Transverse colon (tissue), 4 donors: ENCODE measurements at regions of chr1 and their contacts with region 1.

Region 1: DNA sequence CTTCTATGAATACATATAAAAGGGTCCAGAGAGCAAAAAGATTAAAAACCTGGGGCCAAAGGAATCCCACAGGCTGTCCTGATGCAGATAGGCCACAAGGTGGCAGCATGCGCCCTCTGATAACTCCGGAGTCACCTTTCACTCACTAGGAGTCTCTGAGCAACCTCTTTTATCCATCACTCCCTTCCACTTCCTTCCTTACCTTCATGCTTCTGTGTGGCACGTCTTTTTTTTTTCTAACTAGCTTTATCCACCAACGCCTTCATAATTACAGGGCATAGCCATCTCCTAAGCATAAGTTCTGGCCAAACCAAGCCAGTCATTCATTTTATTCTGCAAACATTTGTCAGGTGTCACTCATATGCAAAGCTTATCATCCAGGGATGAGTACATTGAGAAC is 3.9 kb upstream of the PGLYRP4 start:
- DNase-seq: peak; percentile 66
- H3K4me3 ChIP-seq: no peak overlapping the region
- H3K27ac ChIP-seq: no peak overlapping the region
- H3K4me1 ChIP-seq: no peaks in the 10 kb centered on the region
- H3K27me3 ChIP-seq: peaks cover 33% of the 10 kb centered on the region
- CTCF ChIP-seq: peak; percentile 86 to 95 (median 88)
- EP300 ChIP-seq: no peak
- POLR2A ChIP-seq: no peak

Region 2: GRCh38 chr1:153488731-153489130 is 136.2 kb after region 1 on chr1:
- in situ Hi-C with region 1: loop called in 3 of 4 experiments (anchors 5 kb)
- intact Hi-C with region 1: no loop called
- DNase-seq: no peak
- H3K4me3 ChIP-seq: no peak overlapping the region
- H3K27ac ChIP-seq: peak overlapping the region in 2 of 4 donors; percentile 45 to 68
- H3K4me1 ChIP-seq: peaks cover 6 to 9% (median 7%) of the 10 kb centered on the region in 4 donors
- H3K27me3 ChIP-seq: no peaks in the 10 kb centered on the region
- CTCF ChIP-seq: no peak
- EP300 ChIP-seq: no peak
- POLR2A ChIP-seq: no peak

Region 3: GRCh38 chr1:153494976-153495535 is 142.5 kb after region 1 on chr1:
- in situ Hi-C with region 1: no loop called
- intact Hi-C with region 1: loop called (anchors 5 kb)
- DNase-seq: peak; percentile 76
- H3K4me3 ChIP-seq: no peak overlapping the region
- H3K27ac ChIP-seq: no peak overlapping the region
- H3K4me1 ChIP-seq: peaks cover 6 to 9% (median 7%) of the 10 kb centered on the region in 4 donors
- H3K27me3 ChIP-seq: no peaks in the 10 kb centered on the region
- CTCF ChIP-seq: peak; percentile 91 to 95 (median 93)
- EP300 ChIP-seq: no peak
- POLR2A ChIP-seq: no peak

Region 4: GRCh38 chr1:153598309-153599172 is 246.0 kb after region 1 on chr1:
- in situ Hi-C with region 1: loop called in 1 of 4 experiments (anchors 25 kb)
- intact Hi-C with region 1: no loop called
- DNase-seq: peak; percentile 23
- H3K4me3 ChIP-seq: no peak overlapping the region
- H3K27ac ChIP-seq: peak overlapping the region in 1 of 4 donors; percentile 14
- H3K4me1 ChIP-seq: peaks cover 0 to 3% (median 0%) of the 10 kb centered on the region in 4 donors
- H3K27me3 ChIP-seq: no peaks in the 10 kb centered on the region
- CTCF ChIP-seq: no peak
- EP300 ChIP-seq: no peak
- POLR2A ChIP-seq: peak; percentile 19

Region 5: DNA sequence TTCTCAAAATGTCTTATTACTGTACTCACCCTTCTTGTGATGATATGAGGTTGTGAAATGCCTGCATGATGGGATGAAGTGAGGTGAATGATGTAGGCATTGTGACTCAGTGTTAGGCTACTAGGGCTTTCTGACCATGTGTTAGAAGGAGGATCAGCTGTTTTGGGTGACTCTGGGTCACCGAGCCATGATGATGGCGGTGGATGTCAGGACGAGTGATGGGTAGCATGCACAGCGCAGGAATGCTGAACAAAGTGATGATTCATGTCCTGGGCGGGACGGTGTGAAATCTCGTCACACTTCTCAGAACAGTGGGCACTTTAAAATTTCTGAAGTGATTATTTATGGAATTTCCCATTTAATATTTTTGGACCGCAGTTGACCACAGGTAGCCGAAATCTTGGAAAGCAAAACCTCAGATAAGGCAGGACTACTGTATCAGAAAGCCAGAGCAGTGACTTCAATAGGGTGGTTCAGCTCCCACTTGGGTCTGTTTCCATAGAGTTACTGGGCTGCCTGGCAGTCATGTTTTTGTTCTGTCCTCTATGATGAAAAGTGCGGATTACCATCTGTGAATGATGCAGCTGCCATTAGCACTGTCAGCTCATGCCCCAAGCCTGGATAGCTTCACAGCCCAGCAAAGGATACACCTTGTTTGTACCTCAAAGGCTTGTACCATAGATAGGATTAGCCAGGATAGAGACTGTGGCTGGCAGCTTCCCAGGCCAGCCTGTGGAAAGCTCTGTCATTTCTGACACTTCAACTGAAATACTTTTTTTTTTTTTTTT is 1079.3 kb after region 1 on chr1:
- in situ Hi-C with region 1: no loop called
- intact Hi-C with region 1: no loop called
- DNase-seq: no peak
- H3K4me3 ChIP-seq: no peak overlapping the region
- H3K27ac ChIP-seq: peak overlapping the region; percentile 86 to 93 (median 90)
- H3K4me1 ChIP-seq: peaks cover 64 to 91% (median 82%) of the 10 kb centered on the region in 4 donors
- H3K27me3 ChIP-seq: no peaks in the 10 kb centered on the region
- CTCF ChIP-seq: no peak
- EP300 ChIP-seq: no peak
- POLR2A ChIP-seq: no peak